Activated naive CD4-positive, alpha-beta T cell treated with anti-CD3 and anti-CD28 coated beads for 36 hours (primary cell): ENCODE measurements at regions of chr2 and their contacts with region 1.

Region 1: GRCh38 chr2:201071479-201072200 is at the starts of genes HYCC2 and NDUFB3:
- DNase-seq: peak; percentile 96
- H3K4me3 Mint-ChIP-seq: peak within 1 kb of the TSS; percentile 96
- H3K27ac Mint-ChIP-seq: peak within 1 kb of the TSS; percentile 92
- H3K4me1 Mint-ChIP-seq: peaks cover 51% of the 10 kb centered on the region
- H3K27me3 Mint-ChIP-seq: no peaks in the 10 kb centered on the region
- total RNA-seq, gene HYCC2: 19.1 TPM
- total RNA-seq, gene NDUFB3: 159 to 162 TPM

Region 2: DNA sequence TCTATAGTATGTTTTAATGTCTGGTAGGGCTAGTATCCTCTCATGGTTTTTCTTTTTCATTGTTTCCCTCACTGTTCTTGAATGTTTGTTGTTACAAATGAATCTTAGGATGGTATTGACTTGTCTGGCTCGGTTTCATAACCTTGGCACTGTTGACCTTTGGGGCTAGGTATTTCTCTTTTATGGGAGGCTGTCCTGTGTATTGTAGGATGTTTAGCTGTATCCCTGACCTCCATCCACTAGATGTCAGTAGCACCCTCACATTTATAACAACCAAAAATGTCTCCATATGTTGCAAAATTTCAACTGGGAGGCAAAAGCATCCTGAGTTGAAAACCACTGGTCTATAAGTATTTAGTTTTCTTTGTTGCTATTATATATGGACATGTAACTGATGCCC is 492.9 kb before region 1 on chr2:
- CTCF ChIA-PET with region 1: interaction called, 4 read pairs
- intact Hi-C with region 1: loop called (anchors 1 kb)
- DNase-seq: peak; percentile 18
- H3K4me3 Mint-ChIP-seq: no peak overlapping the region
- H3K27ac Mint-ChIP-seq: peak overlapping the region; percentile 16
- H3K4me1 Mint-ChIP-seq: peaks cover 14% of the 10 kb centered on the region
- H3K27me3 Mint-ChIP-seq: no peaks in the 10 kb centered on the region

Region 3: GRCh38 chr2:200888704-200889625 is 182.7 kb before region 1 on chr2 and contains the starts of genes NIF3L1 and PPIL3:
- CTCF ChIA-PET with region 1: no interaction called
- intact Hi-C with region 1: loop called (anchors 1 kb)
- DNase-seq: peak; percentile 99
- H3K4me3 Mint-ChIP-seq: peak within 1 kb of the TSS; percentile 88
- H3K27ac Mint-ChIP-seq: peak within 1 kb of the TSS; percentile 97
- H3K4me1 Mint-ChIP-seq: peaks cover 50% of the 10 kb centered on the region
- H3K27me3 Mint-ChIP-seq: no peaks in the 10 kb centered on the region
- total RNA-seq, gene NIF3L1: 31.6 to 33.3 TPM
- total RNA-seq, gene PPIL3: 81.3 to 82.2 TPM

Region 4: GRCh38 chr2:201021914-201022313 is 49.7 kb before region 1 on chr2:
- CTCF ChIA-PET with region 1: interaction called, 10 read pairs
- intact Hi-C with region 1: no loop called
- DNase-seq: no peak
- H3K4me3 Mint-ChIP-seq: no peak overlapping the region
- H3K27ac Mint-ChIP-seq: no peak overlapping the region
- H3K4me1 Mint-ChIP-seq: peaks cover 16% of the 10 kb centered on the region
- H3K27me3 Mint-ChIP-seq: no peaks in the 10 kb centered on the region

Region 5: DNA sequence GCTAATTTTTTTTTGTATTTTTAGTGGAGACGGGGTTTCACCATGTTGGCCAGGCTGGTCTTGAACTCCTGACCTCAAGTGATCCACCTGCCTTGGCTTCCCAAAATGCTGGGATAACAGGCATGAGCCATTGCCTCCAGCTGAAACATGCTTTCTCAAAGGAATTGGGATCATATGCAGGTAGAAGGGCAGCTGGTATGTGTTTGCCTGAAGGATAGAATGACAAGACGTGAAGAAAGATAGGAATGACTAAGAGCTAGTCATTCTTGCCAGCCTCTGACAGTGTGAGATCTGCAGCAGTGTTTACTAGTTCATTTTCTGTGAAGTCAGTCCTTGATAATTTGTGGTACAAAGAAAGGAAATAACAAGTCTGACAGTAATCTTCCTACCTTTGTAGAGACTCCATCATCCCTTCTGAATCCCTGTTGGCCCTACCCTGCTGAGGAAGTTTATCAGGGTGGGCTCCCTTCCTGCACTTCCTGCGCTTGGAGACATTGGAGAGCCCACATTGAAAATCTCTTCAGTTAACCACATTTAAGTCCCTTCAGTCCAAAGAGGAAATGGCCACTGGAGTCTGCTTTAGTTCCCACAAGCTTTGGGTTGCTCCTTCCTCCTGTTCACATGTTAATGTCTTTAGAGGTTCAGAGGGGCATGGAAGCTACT is 59.0 kb after region 1 on chr2:
- CTCF ChIA-PET with region 1: interaction called, 16 read pairs
- intact Hi-C with region 1: loop called (anchors 1 kb)
- DNase-seq: peak; percentile 68
- H3K4me3 Mint-ChIP-seq: peak overlapping the region; percentile 76
- H3K27ac Mint-ChIP-seq: peak overlapping the region; percentile 96
- H3K4me1 Mint-ChIP-seq: peaks cover 56% of the 10 kb centered on the region
- H3K27me3 Mint-ChIP-seq: no peaks in the 10 kb centered on the region

Region 6: DNA sequence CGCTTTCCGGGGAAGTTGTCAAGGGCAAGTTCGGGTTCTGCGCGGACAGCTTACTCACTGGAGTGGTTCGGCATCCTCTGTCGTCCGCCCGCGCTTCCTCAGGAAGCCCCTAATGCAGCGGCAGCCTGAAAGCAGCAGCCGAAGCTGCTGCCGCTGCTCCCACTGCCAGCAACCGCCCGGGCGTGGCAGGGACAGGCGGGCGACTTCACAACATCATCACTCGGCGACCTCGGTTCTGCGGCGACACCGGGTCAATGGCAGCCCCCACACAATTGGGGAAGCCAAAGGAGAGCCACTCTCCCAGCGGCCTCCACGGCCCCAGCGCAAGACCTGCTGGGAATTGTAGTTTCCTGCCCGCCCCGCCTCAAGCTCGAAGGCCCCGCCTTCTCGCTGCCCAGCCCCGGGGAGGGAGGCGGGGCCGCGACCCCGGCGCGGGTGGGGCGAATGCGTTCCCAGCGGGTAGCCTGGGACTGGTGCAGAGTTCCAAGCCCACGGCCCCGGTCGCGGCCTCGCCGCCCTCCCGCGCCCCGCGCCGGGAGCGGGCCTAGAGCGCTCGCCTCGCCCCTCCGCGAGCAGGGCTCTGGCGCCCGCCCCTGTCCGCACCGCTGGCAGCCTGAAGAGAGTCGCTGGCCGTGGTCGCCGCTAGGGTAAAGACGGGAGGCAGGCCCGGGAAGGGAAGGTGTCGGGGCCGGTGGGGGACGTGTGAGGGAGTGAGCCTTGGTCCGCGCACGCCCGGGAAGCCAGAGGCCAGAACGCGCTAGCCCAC is 379.8 kb after region 1 on chr2 and contains the starts of genes STRADB and TRAK2:
- CTCF ChIA-PET with region 1: no interaction called
- intact Hi-C with region 1: loop called (anchors 5 kb)
- DNase-seq: peak; percentile 96
- H3K4me3 Mint-ChIP-seq: peak within 1 kb of the TSS; percentile 95
- H3K27ac Mint-ChIP-seq: peak within 1 kb of the TSS; percentile 94
- H3K4me1 Mint-ChIP-seq: peaks cover 51% of the 10 kb centered on the region
- H3K27me3 Mint-ChIP-seq: no peaks in the 10 kb centered on the region
- total RNA-seq, gene STRADB: 17.6 to 19.1 TPM
- total RNA-seq, gene TRAK2: 10.4 TPM